ENCODE measurements at regions of chr1 and their contacts with region 1.

Region 1: GRCh38 chr1:111990878-111991718 is 1.6 kb upstream of the KCND3 start:
- DNase-seq: peak; percentile 70 to 85 (median 77)
- ATAC-seq: peak; percentile 64 to 74 (median 74)
- H3K4me3 ChIP-seq: peak overlapping the region; percentile 49 to 82 (median 64)
- H3K27ac ChIP-seq: peak overlapping the region; percentile 47 to 91 (median 80)
- H3K4me1 ChIP-seq: peaks cover 0 to 53% (median 23%) of the 10 kb centered on the region in 12 donors
- H3K27me3 ChIP-seq: peaks cover 0 to 46% (median 3%) of the 10 kb centered on the region in 9 donors
- CTCF ChIP-seq: peak in 9 of 12 donors; percentile 33 to 61 (median 42)
- POLR2A ChIP-seq: no peak

Region 2: DNA sequence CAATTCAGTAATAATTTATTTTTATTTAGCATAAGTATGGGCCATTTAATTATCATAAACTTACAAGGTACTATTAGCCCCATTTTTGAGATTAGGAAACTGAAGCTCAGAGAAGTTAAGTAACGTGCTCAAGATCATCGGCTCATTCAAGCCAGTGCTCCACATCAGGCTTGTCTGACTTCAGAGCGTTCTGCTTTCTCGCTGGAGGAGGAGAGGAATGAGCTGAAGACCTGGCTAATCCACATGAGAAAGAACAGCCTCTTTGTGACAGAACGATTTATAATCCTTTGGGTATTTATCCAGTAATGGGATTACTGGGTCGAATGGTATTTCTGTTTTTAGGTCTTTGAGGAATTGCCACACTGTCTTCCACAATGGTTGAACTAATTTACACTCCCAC is 195.7 kb before region 1 on chr1:
- intact Hi-C with region 1: loop called in 6 of 10 experiments (anchors 5 to 10 kb)
- DNase-seq: no peak
- ATAC-seq: no peak
- H3K4me3 ChIP-seq: no peak overlapping the region
- H3K27ac ChIP-seq: no peak overlapping the region
- H3K4me1 ChIP-seq: peaks cover 0 to 8% (median 0%) of the 10 kb centered on the region in 12 donors
- H3K27me3 ChIP-seq: no peaks in the 10 kb centered on the region
- CTCF ChIP-seq: no peak
- POLR2A ChIP-seq: no peak

Region 3: GRCh38 chr1:111848852-111849545 is 142.1 kb before region 1 on chr1:
- intact Hi-C with region 1: loop called in 1 of 10 experiments (anchors 5 kb)
- DNase-seq: no peak
- ATAC-seq: no peak
- H3K4me3 ChIP-seq: no peak overlapping the region
- H3K27ac ChIP-seq: peak overlapping the region in 1 of 12 donors; percentile 15
- H3K4me1 ChIP-seq: peaks cover 0 to 75% (median 12%) of the 10 kb centered on the region in 12 donors
- H3K27me3 ChIP-seq: peaks cover 0 to 4% (median 0%) of the 10 kb centered on the region in 9 donors
- CTCF ChIP-seq: no peak
- POLR2A ChIP-seq: no peak

Region 4: DNA sequence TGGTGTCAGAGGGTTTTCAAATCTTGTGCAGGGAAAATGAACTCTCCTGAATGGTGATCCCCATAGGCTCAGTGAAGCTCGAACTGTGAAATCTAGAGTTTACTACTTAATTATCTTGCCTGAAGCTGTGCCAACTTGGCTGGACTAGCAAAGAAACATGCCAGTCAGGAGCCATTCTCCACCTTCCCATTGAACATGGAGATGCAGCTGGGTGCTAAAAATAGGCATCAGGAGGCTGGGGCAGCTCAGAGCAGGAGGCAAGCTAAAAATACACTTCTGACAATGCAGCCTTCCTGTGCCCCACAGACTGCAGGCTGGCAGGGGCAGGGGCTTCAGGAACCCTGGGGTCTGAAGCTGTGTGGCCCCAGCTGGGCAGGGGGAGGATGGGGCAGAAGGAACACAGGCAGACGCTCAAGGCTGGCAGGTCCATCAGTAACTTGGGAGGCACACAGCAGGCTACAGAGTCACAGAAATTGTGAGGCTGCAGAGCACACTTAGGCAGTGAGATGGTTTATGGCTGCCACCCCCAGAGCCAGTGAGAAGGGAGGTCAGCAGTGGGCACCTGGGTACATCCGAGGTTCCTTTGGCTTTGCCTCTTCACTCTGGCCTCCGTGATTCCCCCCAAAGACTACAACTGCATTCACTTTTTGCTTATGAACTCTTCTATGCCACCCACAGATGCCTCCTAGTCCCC is 153.8 kb after region 1 on chr1:
- intact Hi-C with region 1: loop called in 5 of 10 experiments (anchors 5 to 10 kb)
- DNase-seq: peak in 4 of 5 donors; percentile 43 to 71 (median 60)
- ATAC-seq: peak; percentile 86 to 95 (median 92)
- H3K4me3 ChIP-seq: no peak overlapping the region
- H3K27ac ChIP-seq: peak overlapping the region in 9 of 12 donors; percentile 18 to 70 (median 52)
- H3K4me1 ChIP-seq: peaks cover 0 to 36% (median 6%) of the 10 kb centered on the region in 12 donors
- H3K27me3 ChIP-seq: no peaks in the 10 kb centered on the region
- CTCF ChIP-seq: no peak
- POLR2A ChIP-seq: no peak

Region 5: DNA sequence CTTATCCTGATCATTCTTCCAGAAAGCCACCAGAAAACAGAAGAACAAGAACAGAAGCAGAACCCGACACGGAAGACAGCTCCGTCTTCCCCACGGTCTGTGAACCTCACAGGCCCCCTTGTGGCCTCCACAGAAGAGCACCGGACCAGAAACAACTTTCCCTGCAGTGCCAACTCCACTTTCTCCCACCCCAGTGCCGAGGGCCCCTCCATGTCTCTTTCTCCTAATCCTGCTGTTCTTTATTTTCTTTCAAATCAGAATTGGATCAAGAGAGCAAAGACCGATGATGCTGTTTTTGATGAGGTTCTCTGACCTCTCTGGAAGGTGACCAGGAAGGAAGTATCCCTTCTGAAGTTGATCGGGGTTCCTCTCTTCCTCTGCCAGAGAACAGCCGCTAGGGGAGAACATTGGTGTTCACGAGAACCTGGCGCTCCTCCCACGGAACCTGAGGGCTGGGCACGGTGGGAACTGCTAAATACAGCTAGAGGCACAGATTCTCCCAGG is 346.0 kb after region 1 on chr1:
- intact Hi-C with region 1: loop called in 7 of 10 experiments (anchors 2 to 10 kb)
- DNase-seq: peak in 4 of 5 donors; percentile 45 to 66 (median 50)
- ATAC-seq: peak; percentile 66 to 94 (median 86)
- H3K4me3 ChIP-seq: peak overlapping the region in 3 of 12 donors; percentile 2 to 17 (median 8)
- H3K27ac ChIP-seq: no peak overlapping the region
- H3K4me1 ChIP-seq: peaks cover 0 to 5% (median 0%) of the 10 kb centered on the region in 12 donors
- H3K27me3 ChIP-seq: no peaks in the 10 kb centered on the region
- CTCF ChIP-seq: peak; percentile 47 to 83 (median 71)
- POLR2A ChIP-seq: no peak

Measured in heart left ventricle (tissue), 16 donors.